Natural killer cell (primary cell): ENCODE measurements at regions of chr1 and their contacts with region 1.

Region 1: GRCh38 chr1:185420588-185421081 is 103.6 kb upstream of the IVNS1ABP start:
- DNase-seq: peak; percentile 26 to 72
- ATAC-seq: peak; percentile 85 to 91 (median 91)
- H3K4me3 ChIP-seq: no peak overlapping the region
- H3K4me3 Mint-ChIP-seq: peak overlapping the region; percentile 81
- H3K27ac ChIP-seq: peak overlapping the region; percentile 78
- H3K27ac Mint-ChIP-seq: peak overlapping the region; percentile 84 to 98
- H3K4me1 ChIP-seq: peaks cover 31% of the 10 kb centered on the region
- H3K4me1 Mint-ChIP-seq: peaks cover 58 to 67% of the 10 kb centered on the region in 2 donors
- H3K27me3 ChIP-seq: no peaks in the 10 kb centered on the region
- H3K27me3 Mint-ChIP-seq: no peaks in the 10 kb centered on the region
- CTCF ChIP-seq: no peak

Region 2: GRCh38 chr1:185338719-185339622 is 81.7 kb before region 1 on chr1:
- intact Hi-C with region 1: loop called (anchors 2 kb)
- DNase-seq: peak; percentile 39 to 71
- ATAC-seq: peak; percentile 81 to 88 (median 84)
- H3K4me3 ChIP-seq: no peak overlapping the region
- H3K4me3 Mint-ChIP-seq: peak overlapping the region; percentile 76
- H3K27ac ChIP-seq: peak overlapping the region; percentile 63
- H3K27ac Mint-ChIP-seq: peak overlapping the region; percentile 83 to 84
- H3K4me1 ChIP-seq: peaks cover 25% of the 10 kb centered on the region
- H3K4me1 Mint-ChIP-seq: peaks cover 39 to 44% of the 10 kb centered on the region in 2 donors
- H3K27me3 ChIP-seq: no peaks in the 10 kb centered on the region
- H3K27me3 Mint-ChIP-seq: no peaks in the 10 kb centered on the region
- CTCF ChIP-seq: no peak

Region 3: GRCh38 chr1:185439727-185440415 is 19.2 kb after region 1 on chr1:
- intact Hi-C with region 1: loop called (anchors 1 kb)
- DNase-seq: peak in 1 of 2 donors; percentile 73
- ATAC-seq: peak; percentile 75 to 83 (median 81)
- H3K4me3 ChIP-seq: no peak overlapping the region
- H3K4me3 Mint-ChIP-seq: no peak overlapping the region
- H3K27ac ChIP-seq: peak overlapping the region; percentile 87
- H3K27ac Mint-ChIP-seq: no peak overlapping the region
- H3K4me1 ChIP-seq: peaks cover 38% of the 10 kb centered on the region
- H3K4me1 Mint-ChIP-seq: peaks cover 7 to 9% of the 10 kb centered on the region in 2 donors
- H3K27me3 ChIP-seq: no peaks in the 10 kb centered on the region
- H3K27me3 Mint-ChIP-seq: no peaks in the 10 kb centered on the region
- CTCF ChIP-seq: no peak

Region 4: DNA sequence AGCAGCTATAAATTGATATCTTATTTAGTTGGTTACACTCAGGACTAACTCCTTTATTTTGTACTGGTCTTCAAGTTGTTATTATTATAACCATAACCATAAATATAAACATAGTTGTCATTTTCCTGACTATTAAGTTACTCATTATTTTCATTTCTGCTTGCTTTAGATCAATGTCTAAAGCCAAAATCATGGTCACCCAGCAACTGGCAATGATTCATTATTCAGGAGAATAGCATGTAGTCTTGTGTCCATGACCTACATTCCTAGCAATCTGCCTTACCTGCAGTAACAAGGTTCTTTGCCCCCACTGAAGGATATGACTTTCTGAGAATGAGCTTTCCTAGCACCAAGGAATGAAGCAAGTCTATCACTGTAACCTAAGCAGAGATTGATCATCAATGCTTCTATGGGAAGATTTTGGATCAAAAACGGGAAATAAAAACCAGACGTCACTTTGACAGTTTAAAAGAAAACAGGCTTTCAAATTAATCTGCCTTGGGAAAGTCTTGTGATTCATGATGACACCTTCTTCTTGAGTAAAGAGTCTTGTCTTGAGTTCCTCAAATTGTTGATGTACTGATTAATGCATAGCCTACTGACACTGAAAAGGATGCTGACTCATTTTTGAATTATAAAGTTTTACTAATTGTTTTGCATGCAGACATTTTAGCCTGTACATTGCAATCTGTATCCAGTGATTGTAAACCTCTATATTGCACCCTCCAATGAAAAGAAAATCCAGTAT is 99.7 kb after region 1 on chr1:
- intact Hi-C with region 1: no loop called
- DNase-seq: no peak
- ATAC-seq: peak in 1 of 3 donors; percentile 52
- H3K4me3 ChIP-seq: no peak overlapping the region
- H3K4me3 Mint-ChIP-seq: no peak overlapping the region
- H3K27ac ChIP-seq: no peak overlapping the region
- H3K27ac Mint-ChIP-seq: no peak overlapping the region
- H3K4me1 ChIP-seq: no peaks in the 10 kb centered on the region
- H3K4me1 Mint-ChIP-seq: no peaks in the 10 kb centered on the region
- H3K27me3 ChIP-seq: no peaks in the 10 kb centered on the region
- H3K27me3 Mint-ChIP-seq: no peaks in the 10 kb centered on the region
- CTCF ChIP-seq: no peak